ENCODE measurements at regions of chr3 and their contacts with region 1.

Region 1: DNA sequence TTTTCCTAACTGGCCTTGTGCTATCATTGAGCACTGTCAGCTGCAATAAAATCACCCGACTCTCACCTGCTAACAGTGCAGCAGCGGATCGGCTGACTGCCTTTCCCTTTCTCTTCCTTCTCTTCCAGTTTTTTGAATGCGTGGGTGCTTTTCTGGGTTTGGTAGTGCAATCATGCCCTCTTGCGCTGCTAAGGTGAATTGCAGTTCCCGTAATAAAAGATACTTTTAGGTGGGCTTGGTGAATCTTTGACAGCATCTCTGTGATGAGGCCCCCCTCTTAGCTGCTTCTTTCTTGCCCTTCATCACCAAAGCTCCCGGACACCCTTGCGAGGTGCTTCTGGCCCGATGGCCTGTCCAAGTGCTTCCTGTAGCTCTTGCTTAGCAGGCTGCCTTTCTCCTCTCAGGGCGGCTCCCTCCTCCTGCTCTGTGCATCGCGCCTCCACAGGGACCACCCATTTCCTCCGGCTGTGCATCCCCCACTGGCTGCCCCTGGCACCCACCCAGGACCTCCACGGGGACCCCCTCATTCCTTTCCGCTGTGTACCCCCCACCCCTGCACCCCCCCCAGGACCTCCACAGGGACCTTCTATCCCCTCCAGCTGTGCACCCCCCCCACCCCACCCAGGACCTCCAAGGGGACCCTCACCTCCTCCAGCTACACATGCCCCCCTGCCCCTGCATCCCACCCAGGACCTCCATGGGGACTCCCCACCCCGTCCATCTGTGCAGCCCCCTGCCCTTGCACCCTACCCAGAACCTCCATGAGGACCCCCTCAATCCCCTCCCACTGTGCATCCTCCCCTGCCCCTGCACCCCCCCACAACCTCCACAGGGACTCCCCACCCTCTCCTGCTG is 50.8 kb upstream of the RPL32 start:
- DNase-seq: peak; percentile 36 to 58 (median 56)
- H3K4me3 ChIP-seq: peak overlapping the region in 1 of 3 experiments; percentile 55
- H3K4me3 Mint-ChIP-seq: peak overlapping the region; percentile 59 to 76
- H3K27ac ChIP-seq: no peak overlapping the region
- H3K27ac Mint-ChIP-seq: peak overlapping the region in 1 of 7 donors; percentile 15
- H3K4me1 ChIP-seq: peaks cover 3 to 4% of the 10 kb centered on the region in 2 donors
- H3K4me1 Mint-ChIP-seq: peaks cover 23% of the 10 kb centered on the region
- H3K27me3 ChIP-seq: no peaks in the 10 kb centered on the region
- H3K27me3 Mint-ChIP-seq: peaks cover 8 to 26% (median 17%) of the 10 kb centered on the region in 3 donors
- CTCF ChIP-seq: peak; percentile 96

Region 2: GRCh38 chr3:12810013-12810780 is 82.0 kb before region 1 on chr3:
- intact Hi-C with region 1: no loop called
- DNase-seq: peak; percentile 73 to 87 (median 80)
- H3K4me3 ChIP-seq: peak overlapping the region; percentile 24 to 79 (median 62)
- H3K4me3 Mint-ChIP-seq: peak overlapping the region; percentile 75 to 76
- H3K27ac ChIP-seq: no peak overlapping the region
- H3K27ac Mint-ChIP-seq: no peak overlapping the region
- H3K4me1 ChIP-seq: peaks cover 4 to 12% of the 10 kb centered on the region in 2 donors
- H3K4me1 Mint-ChIP-seq: peaks cover 10% of the 10 kb centered on the region
- H3K27me3 ChIP-seq: peaks cover 0 to 6% of the 10 kb centered on the region in 2 donors
- H3K27me3 Mint-ChIP-seq: peaks cover 6 to 15% (median 6%) of the 10 kb centered on the region in 3 donors
- CTCF ChIP-seq: peak; percentile 96

Region 3: GRCh38 chr3:12868039-12869034 is 23.9 kb before region 1 on chr3:
- intact Hi-C with region 1: loop called (anchors 2 kb)
- DNase-seq: peak; percentile 80 to 85 (median 85)
- H3K4me3 ChIP-seq: peak overlapping the region; percentile 20 to 68 (median 29)
- H3K4me3 Mint-ChIP-seq: peak overlapping the region; percentile 71 to 92
- H3K27ac ChIP-seq: no peak overlapping the region
- H3K27ac Mint-ChIP-seq: peak overlapping the region in 3 of 7 donors; percentile 30 to 77 (median 39)
- H3K4me1 ChIP-seq: peaks cover 15 to 22% of the 10 kb centered on the region in 2 donors
- H3K4me1 Mint-ChIP-seq: peaks cover 21% of the 10 kb centered on the region
- H3K27me3 ChIP-seq: peaks cover 5 to 19% of the 10 kb centered on the region in 2 donors
- H3K27me3 Mint-ChIP-seq: peaks cover 18 to 37% (median 31%) of the 10 kb centered on the region in 3 donors
- CTCF ChIP-seq: peak; percentile 93

Region 4: GRCh38 chr3:12934431-12934830 is 42.2 kb after region 1 on chr3:
- intact Hi-C with region 1: no loop called
- DNase-seq: no peak
- H3K4me3 ChIP-seq: no peak overlapping the region
- H3K4me3 Mint-ChIP-seq: no peak overlapping the region
- H3K27ac ChIP-seq: no peak overlapping the region
- H3K27ac Mint-ChIP-seq: peak overlapping the region in 1 of 7 donors; percentile 61
- H3K4me1 ChIP-seq: no peaks in the 10 kb centered on the region
- H3K4me1 Mint-ChIP-seq: peaks cover 2% of the 10 kb centered on the region
- H3K27me3 ChIP-seq: no peaks in the 10 kb centered on the region
- H3K27me3 Mint-ChIP-seq: peaks cover 0 to 2% (median 0%) of the 10 kb centered on the region in 3 donors
- CTCF ChIP-seq: no peak